Activated T-helper 1 cell treated with anti-CD3 and anti-CD28 coated beads, Interleukin-12 subunit alpha, Interleukin-12 subunit beta, Interleukin-2, Interleukin-4 antibody, amounts not matched to agents 30 ng/mL and 10 ng/mL and 1 ng/mL, durations not matched to agents 14 hours and 24 hours and 36 hours (primary cell): ENCODE measurements at regions of chr11 and their contacts with region 1.

Region 1: DNA sequence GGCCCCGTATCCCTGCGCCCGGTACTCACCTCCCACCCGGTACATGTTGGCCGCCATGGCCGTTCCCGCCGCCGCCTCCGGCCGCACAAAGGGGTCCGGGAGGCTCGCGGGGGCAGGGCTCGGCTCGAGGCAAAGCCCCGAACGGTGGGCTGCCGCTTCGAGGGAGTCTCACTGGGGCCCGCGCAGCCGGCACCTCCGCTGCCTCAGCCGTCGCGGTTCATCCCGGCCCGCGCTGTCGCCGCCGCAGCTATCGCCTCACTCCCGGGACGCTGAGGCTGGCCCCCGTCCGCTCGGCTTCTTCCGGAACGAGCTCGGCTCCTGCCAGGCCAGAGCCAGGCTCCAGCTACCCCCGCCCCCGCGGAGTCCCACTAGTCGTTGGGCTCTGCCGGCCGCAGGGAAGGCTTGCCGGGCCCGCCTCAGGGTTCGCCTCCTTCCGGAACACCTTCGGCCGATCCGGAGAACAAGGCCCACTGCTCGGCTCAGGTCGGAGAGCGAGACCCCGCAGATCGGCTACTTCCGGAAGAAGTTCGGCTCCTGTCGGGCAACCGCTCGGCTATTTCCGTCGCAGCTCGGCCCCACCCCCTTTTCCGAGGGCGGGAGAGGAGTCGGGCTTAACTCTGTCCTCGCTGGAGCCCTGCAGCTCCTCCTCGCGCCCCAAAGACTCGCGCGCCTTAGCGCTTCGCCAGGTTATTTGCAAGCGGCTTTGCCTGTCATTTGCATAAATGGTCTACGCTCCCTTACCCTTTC is at the start of gene MTA2:
- DNase-seq: peak; percentile 100
- H3K4me3 Mint-ChIP-seq: peak within 1 kb of the TSS; percentile 95
- H3K27ac Mint-ChIP-seq: peak within 1 kb of the TSS; percentile 92
- H3K4me1 Mint-ChIP-seq: peaks cover 54% of the 10 kb centered on the region
- H3K27me3 Mint-ChIP-seq: no peaks in the 10 kb centered on the region
- total RNA-seq, gene MTA2: 224 and 230 TPM in 2 replicates

Region 2: GRCh38 chr11:62573592-62574362 is 27.8 kb before region 1 on chr11 and contains the start of gene EEF1G:
- intact Hi-C with region 1: loop called (anchors 1 kb)
- DNase-seq: peak; percentile 99
- H3K4me3 Mint-ChIP-seq: peak within 1 kb of the TSS; percentile 98
- H3K27ac Mint-ChIP-seq: peak within 1 kb of the TSS; percentile 92
- H3K4me1 Mint-ChIP-seq: peaks cover 37% of the 10 kb centered on the region
- H3K27me3 Mint-ChIP-seq: no peaks in the 10 kb centered on the region
- total RNA-seq, gene EEF1G: 1,154 and 1,169 TPM in 2 replicates

Region 3: DNA sequence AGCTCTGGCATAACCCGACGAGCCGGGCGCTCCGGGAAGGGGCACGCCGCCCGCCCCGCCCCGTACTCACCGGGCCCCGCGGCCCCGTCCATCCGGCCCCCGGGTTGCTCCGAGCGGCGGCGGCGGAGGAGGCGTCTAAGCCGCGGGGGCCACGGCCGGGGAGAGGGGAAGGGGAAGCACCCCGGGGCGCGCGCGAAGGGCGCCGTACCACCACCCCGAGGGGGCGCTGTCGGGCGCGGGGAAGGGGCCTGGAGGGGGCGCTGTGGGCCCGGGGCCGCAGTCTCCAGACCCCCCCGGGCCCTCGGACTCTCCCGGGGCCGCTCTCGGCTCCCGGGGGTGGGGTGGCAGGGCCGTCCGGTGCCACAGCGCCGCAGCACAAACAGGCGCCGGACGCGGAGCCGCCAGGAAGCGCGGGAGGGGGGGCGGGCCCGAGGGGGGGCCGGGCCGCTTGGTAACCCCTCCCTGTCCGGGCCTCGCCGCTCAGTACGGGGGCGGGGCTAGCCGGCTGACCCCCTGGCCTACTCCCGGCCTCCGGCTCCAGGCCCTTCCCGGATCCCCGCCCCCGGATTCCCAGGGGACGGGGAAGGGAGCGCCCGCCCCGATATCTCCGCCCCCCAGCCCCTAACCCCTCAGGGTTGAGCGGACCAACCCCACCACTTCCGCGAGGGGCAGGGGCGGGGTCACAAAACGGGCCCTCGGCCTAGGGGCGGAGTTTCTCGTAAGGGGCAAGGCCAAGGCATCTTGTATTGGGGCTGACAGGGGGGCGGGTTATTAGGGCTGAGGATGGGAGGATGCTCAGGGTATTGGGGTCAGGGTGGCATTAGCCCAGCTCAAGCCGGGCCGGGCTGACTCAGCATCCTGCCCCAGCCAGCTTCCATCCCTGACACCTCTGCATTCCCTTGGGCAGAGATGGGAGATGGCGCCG is 11.1 kb after region 1 on chr11 and contains the starts of genes EML3 and ROM1:
- intact Hi-C with region 1: loop called (anchors 1 kb)
- DNase-seq: peak; percentile 85
- H3K4me3 Mint-ChIP-seq: peak within 1 kb of the TSS; percentile 96
- H3K27ac Mint-ChIP-seq: peak within 1 kb of the TSS; percentile 97
- H3K4me1 Mint-ChIP-seq: peaks cover 32% of the 10 kb centered on the region
- H3K27me3 Mint-ChIP-seq: no peaks in the 10 kb centered on the region
- total RNA-seq, gene EML3: 164 and 167 TPM in 2 replicates
- total RNA-seq, gene ROM1: 2.5 and 3.2 TPM in 2 replicates

Region 4: GRCh38 chr11:62621567-62622470 is 20.3 kb after region 1 on chr11 and contains the start of gene B3GAT3:
- intact Hi-C with region 1: loop called (anchors 1 kb)
- DNase-seq: peak; percentile 96
- H3K4me3 Mint-ChIP-seq: peak within 1 kb of the TSS; percentile 95
- H3K27ac Mint-ChIP-seq: peak within 1 kb of the TSS; percentile 96
- H3K4me1 Mint-ChIP-seq: peaks cover 25% of the 10 kb centered on the region
- H3K27me3 Mint-ChIP-seq: no peaks in the 10 kb centered on the region
- total RNA-seq, gene B3GAT3: 93.8 and 94.3 TPM in 2 replicates

Region 5: DNA sequence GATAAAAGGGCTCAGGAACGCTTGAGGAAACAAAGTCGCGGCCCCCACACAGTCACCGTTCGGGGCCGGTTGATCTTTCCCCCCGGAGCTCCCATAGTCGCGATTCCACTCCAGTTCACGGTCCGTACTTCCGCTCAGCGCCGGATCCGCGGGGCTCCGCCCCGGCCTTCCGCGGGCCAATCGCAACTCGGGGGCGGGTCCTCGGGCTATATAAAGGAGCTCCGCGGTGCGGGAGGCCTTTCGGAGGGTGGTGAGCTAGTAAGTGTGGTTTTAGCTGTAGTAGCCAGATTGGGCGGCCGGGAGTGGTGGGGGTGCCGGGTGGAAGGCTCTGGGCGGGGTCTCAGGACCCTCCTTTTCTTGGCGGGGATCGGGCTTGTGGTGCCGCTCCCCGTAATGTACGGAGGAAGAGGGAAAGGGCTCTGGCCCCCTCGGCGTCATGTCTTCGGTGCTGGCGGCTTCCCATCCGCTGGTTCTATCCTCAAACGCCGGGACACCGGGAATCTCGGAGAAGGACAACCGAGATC is 63.6 kb after region 1 on chr11 and contains the starts of genes C11orf98 and CSKMT:
- intact Hi-C with region 1: loop called (anchors 1 kb)
- DNase-seq: peak; percentile 97
- H3K4me3 Mint-ChIP-seq: peak within 1 kb of the TSS; percentile 98
- H3K27ac Mint-ChIP-seq: peak within 1 kb of the TSS; percentile 81
- H3K4me1 Mint-ChIP-seq: peaks cover 33% of the 10 kb centered on the region
- H3K27me3 Mint-ChIP-seq: no peaks in the 10 kb centered on the region
- total RNA-seq, gene C11orf98: 146 and 151 TPM in 2 replicates
- total RNA-seq, gene CSKMT: 65.0 and 69.4 TPM in 2 replicates

Region 6: DNA sequence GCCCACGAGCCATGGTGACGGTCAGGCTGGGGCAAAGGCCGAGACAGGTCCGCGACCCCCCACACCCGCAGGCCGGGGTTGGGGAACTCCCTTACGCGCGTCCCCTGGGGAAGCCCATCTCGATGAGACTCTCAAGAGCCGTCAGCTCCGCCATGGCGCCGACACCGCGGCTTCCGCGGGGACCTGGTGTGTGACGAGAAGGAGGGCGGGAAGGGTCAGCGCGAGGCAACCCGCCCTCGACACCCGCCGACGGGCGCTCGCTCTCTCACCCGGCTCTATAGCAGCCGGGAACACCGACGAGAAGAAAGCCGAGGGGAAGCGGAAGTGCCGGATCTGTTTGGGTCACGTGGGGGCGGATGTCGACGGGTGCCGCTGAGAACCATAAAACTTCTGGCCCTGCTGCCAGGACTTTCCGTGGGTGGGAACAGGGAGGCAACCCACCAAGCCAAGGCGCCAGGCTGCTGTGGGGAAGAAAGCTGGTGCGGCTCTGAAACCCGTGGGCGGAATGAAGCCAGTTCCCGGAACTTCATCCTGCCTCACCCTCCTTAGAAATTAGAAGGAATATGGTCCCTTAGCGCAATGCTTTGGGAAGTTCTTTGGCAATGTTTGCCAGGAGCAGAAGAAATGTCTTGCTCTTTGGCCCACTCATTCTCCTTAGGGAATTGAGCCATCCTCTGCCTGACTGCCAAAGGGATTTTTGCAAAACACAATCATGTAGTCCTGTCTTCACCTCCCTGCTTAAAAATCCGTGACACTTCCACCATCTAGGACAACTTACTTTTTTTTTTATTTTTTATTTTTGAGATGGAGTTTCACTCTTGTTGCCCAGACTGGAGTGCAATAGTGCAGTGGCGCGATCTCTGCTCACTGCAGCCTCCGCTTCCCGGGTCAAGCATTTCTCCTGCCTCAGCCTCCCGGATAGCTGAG is 77.5 kb after region 1 on chr11 and contains the start of gene UBXN1:
- intact Hi-C with region 1: loop called (anchors 1 kb)
- DNase-seq: peak; percentile 79
- H3K4me3 Mint-ChIP-seq: peak within 1 kb of the TSS; percentile 80
- H3K27ac Mint-ChIP-seq: peak within 1 kb of the TSS; percentile 82
- H3K4me1 Mint-ChIP-seq: peaks cover 36% of the 10 kb centered on the region
- H3K27me3 Mint-ChIP-seq: no peaks in the 10 kb centered on the region
- total RNA-seq, gene UBXN1: 125 and 128 TPM in 2 replicates

Region 7: GRCh38 chr11:62855571-62856332 is 254.2 kb after region 1 on chr11:
- intact Hi-C with region 1: loop called (anchors 1 kb)
- DNase-seq: peak; percentile 99
- H3K4me3 Mint-ChIP-seq: peak overlapping the region; percentile 98
- H3K27ac Mint-ChIP-seq: peak overlapping the region; percentile 98
- H3K4me1 Mint-ChIP-seq: peaks cover 71% of the 10 kb centered on the region
- H3K27me3 Mint-ChIP-seq: peaks cover 5% of the 10 kb centered on the region